ENCODE measurements at regions of chr11 and their contacts with region 1.

Region 1: GRCh38 chr11:111446404-111447111 is 65.6 kb downstream of the BTG4 start:
- DNase-seq: peak; percentile 55
- ATAC-seq: peak; percentile 95
- H3K4me3 Mint-ChIP-seq: no peak overlapping the region
- H3K27ac Mint-ChIP-seq: peak overlapping the region; percentile 43
- H3K4me1 Mint-ChIP-seq: peaks cover 36% of the 10 kb centered on the region
- H3K27me3 Mint-ChIP-seq: peaks cover 2% of the 10 kb centered on the region
- CTCF ChIP-seq: no peak

Region 2: DNA sequence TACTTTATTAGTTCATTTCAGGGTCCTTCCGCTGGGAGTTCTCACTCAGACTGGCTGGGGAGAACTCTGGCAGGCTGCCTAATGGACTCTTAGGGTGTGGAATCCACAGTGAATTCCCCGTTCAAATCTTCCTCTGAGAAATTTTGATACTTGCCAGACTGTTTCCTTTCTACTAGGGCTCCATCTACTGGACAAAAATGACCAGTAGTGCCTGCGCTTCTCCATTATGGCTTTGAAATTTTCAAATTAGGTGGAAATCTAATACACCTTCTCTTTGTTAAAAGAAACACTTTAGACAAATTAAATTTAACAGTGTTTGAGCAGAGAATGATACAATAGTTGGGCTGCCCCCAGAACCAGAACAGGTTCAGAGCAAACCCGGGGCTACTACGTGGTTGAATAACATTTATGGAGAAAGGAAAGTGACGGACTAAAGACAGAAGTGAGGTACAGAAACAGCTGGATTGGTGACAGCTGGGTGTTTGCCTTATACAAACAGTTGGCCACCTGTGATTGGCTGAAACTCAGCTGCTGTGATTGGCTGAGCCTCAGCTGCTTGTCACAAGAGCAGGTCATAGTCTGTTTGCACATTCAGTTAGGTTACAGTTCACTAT is 1069.7 kb before region 1 on chr11:
- CTCF ChIA-PET with region 1: no interaction called
- POLR2A ChIA-PET with region 1: no interaction called
- intact Hi-C with region 1: loop called (anchors 1 kb)
- DNase-seq: no peak
- ATAC-seq: peak; percentile 58
- H3K4me3 Mint-ChIP-seq: peak overlapping the region; percentile 13
- H3K27ac Mint-ChIP-seq: no peak overlapping the region
- H3K4me1 Mint-ChIP-seq: peaks cover 5% of the 10 kb centered on the region
- H3K27me3 Mint-ChIP-seq: no peaks in the 10 kb centered on the region
- CTCF ChIP-seq: no peak

Region 3: DNA sequence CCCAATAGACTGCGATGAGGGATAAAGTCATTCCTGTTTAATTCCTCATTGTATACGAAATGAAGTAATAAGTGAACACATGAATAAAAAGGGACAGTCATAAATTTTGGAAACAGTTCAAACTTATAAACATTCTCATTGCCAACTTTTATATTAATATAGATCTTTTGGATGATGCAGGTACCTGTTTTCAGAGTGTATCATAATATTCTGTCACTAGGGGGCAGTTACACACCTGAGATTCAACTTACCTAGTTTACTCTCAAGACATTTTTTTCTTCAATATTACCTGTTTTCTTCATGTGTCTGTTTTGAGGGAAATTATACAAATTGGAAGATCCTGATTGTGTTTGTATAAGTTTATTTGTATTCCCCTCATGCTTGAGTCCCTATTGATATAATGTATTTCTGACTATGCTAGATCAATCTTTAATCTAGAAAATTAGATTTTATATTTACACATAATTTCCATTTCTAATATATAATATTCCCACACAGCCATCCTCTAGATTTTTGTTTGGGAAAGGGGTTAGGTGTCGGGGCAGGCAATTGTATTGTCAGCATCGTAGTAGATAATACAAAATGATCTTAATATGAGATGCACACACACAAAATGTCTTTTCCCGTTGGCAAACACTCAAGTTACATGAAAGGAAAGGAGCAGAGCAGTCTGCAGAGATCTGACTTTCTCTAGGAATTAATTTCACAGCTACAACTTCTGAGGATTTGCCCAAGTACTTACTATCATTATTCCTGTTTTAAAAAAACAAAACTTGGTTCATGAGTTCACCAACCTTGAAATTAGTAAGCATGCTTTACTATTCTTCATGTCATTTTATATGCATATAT is 998.4 kb before region 1 on chr11:
- CTCF ChIA-PET with region 1: interaction called, 9 read pairs
- POLR2A ChIA-PET with region 1: no interaction called
- intact Hi-C with region 1: loop called (anchors 5 kb)
- DNase-seq: no peak
- ATAC-seq: no peak
- H3K4me3 Mint-ChIP-seq: no peak overlapping the region
- H3K27ac Mint-ChIP-seq: no peak overlapping the region
- H3K4me1 Mint-ChIP-seq: peaks cover 7% of the 10 kb centered on the region
- H3K27me3 Mint-ChIP-seq: no peaks in the 10 kb centered on the region
- CTCF ChIP-seq: no peak

Region 4: DNA sequence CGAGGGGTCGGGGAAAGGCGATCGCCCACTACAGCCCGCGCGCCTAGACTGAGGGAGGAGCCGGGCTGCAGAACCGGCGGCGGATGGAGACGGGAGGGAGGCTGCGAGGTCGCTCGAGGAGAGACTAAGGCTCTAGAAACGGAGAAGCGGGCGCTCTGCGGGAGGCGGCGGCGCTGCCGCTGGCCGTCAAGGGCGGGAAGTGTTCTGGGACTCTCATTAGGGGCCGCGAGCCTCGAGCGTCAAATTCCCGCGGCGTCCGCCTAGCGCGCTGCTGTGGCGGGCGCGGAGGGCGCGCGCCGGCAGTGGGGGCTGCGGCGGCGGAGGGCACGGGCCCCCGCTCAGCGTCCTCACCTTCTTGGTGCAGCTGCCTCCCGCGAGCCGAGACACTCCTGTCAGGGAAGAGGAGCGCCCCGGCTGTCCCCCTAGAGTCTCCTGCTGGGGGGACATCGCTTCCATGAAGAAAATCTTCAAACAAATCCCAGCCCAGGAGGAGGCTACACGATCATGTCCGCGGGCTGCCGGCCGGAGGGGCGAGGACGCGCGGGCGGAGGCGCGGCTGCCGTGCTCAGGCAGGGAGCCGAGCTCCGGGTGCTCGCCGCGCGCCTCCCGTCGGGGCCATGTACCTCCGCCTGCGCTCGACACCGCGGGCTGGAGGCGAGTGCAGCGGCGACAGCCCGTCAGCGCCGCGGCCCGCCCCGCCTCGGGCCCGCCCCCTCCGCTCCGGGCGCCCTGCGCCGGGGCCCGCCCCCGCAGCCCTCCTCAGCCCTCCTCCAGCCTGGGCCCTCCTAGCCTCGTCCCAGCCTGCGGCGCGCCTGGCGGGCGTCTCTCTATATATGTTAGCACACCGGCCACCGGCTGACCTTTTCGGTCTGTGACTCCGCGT is 734.5 kb before region 1 on chr11 and contains the start of gene ARHGAP20:
- CTCF ChIA-PET with region 1: no interaction called
- POLR2A ChIA-PET with region 1: no interaction called
- intact Hi-C with region 1: loop called (anchors 10 kb)
- DNase-seq: peak; percentile 71
- ATAC-seq: peak; percentile 95
- H3K4me3 Mint-ChIP-seq: peak within 1 kb of the TSS; percentile 84
- H3K27ac Mint-ChIP-seq: no peak within 1 kb of the TSS
- H3K4me1 Mint-ChIP-seq: peaks cover 21% of the 10 kb centered on the region
- H3K27me3 Mint-ChIP-seq: peaks cover 42% of the 10 kb centered on the region
- CTCF ChIP-seq: no peak
- total RNA-seq, gene ARHGAP20: 0.11 and 0.17 TPM in 2 replicates

Region 5: GRCh38 chr11:111399187-111400031 is 47.1 kb before region 1 on chr11:
- CTCF ChIA-PET with region 1: no interaction called
- POLR2A ChIA-PET with region 1: no interaction called
- intact Hi-C with region 1: no loop called
- DNase-seq: no peak
- ATAC-seq: peak; percentile 54
- H3K4me3 Mint-ChIP-seq: peak overlapping the region; percentile 82
- H3K27ac Mint-ChIP-seq: peak overlapping the region; percentile 88
- H3K4me1 Mint-ChIP-seq: peaks cover 88% of the 10 kb centered on the region
- H3K27me3 Mint-ChIP-seq: no peaks in the 10 kb centered on the region
- CTCF ChIP-seq: no peak